Kidney (tissue), 22 donors: ENCODE measurements at regions of chr5 and their contacts with region 1.

Region 1: GRCh38 chr5:74640450-74640953 is at the start of gene ENC1:
- DNase-seq: peak; percentile 96 to 98 (median 97)
- H3K4me3 ChIP-seq: peak within 1 kb of the TSS; percentile 74 to 80 (median 77)
- H3K27ac ChIP-seq: peak within 1 kb of the TSS; percentile 81 to 84
- H3K4me1 ChIP-seq: peaks cover 0 to 6% (median 0%) of the 10 kb centered on the region in 3 donors
- H3K27me3 ChIP-seq: no peaks in the 10 kb centered on the region
- CTCF ChIP-seq: peak; percentile 56
- total RNA-seq, gene ENC1: 7.5 TPM

Region 2: GRCh38 chr5:74035521-74035981 is 605.0 kb before region 1 on chr5:
- intact Hi-C with region 1: loop called (anchors 10 kb)
- DNase-seq: peak in 4 of 5 donors; percentile 54 to 89 (median 72)
- H3K4me3 ChIP-seq: no peak overlapping the region
- H3K27ac ChIP-seq: no peak overlapping the region
- H3K4me1 ChIP-seq: peaks cover 0 to 2% (median 0%) of the 10 kb centered on the region in 3 donors
- H3K27me3 ChIP-seq: no peaks in the 10 kb centered on the region
- CTCF ChIP-seq: peak; percentile 20

Region 3: GRCh38 chr5:74408150-74409043 is 232.1 kb before region 1 on chr5:
- intact Hi-C with region 1: no loop called
- DNase-seq: no peak
- H3K4me3 ChIP-seq: no peak overlapping the region
- H3K27ac ChIP-seq: no peak overlapping the region
- H3K4me1 ChIP-seq: no peaks in the 10 kb centered on the region
- H3K27me3 ChIP-seq: no peaks in the 10 kb centered on the region
- CTCF ChIP-seq: no peak

Region 4: GRCh38 chr5:74581988-74582365 is 58.5 kb before region 1 on chr5:
- intact Hi-C with region 1: loop called (anchors 10 kb)
- DNase-seq: no peak
- H3K4me3 ChIP-seq: no peak overlapping the region
- H3K27ac ChIP-seq: no peak overlapping the region
- H3K4me1 ChIP-seq: peaks cover 0 to 4% (median 4%) of the 10 kb centered on the region in 3 donors
- H3K27me3 ChIP-seq: no peaks in the 10 kb centered on the region
- CTCF ChIP-seq: no peak